Activated naive CD8-positive, alpha-beta T cell treated with anti-CD3 and anti-CD28 coated beads, Interleukin-2, amount 10 ng/mL, durations not matched to agents 7 days and 5 days (primary cell): ENCODE measurements at regions of chr17 and their contacts with region 1.

Region 1: GRCh38 chr17:6651357-6651918 is at the starts of genes C17orf100 and MED31:
- DNase-seq: peak; percentile 96
- ATAC-seq: peak; percentile 93
- H3K4me3 Mint-ChIP-seq: peak within 1 kb of the TSS; percentile 97
- H3K27ac Mint-ChIP-seq: peak within 1 kb of the TSS; percentile 98
- H3K4me1 Mint-ChIP-seq: peaks cover 38% of the 10 kb centered on the region
- H3K27me3 Mint-ChIP-seq: peaks cover 6% of the 10 kb centered on the region
- total RNA-seq, gene C17orf100: 2.0 to 2.5 TPM
- total RNA-seq, gene MED31: 23.1 to 23.2 TPM

Region 2: GRCh38 chr17:6630390-6630789 is 21.0 kb before region 1 on chr17:
- POLR2A ChIA-PET with region 1: no interaction called
- DNase-seq: no peak
- ATAC-seq: no peak
- H3K4me3 Mint-ChIP-seq: no peak overlapping the region
- H3K27ac Mint-ChIP-seq: no peak overlapping the region
- H3K4me1 Mint-ChIP-seq: peaks cover 7% of the 10 kb centered on the region
- H3K27me3 Mint-ChIP-seq: no peaks in the 10 kb centered on the region

Region 3: DNA sequence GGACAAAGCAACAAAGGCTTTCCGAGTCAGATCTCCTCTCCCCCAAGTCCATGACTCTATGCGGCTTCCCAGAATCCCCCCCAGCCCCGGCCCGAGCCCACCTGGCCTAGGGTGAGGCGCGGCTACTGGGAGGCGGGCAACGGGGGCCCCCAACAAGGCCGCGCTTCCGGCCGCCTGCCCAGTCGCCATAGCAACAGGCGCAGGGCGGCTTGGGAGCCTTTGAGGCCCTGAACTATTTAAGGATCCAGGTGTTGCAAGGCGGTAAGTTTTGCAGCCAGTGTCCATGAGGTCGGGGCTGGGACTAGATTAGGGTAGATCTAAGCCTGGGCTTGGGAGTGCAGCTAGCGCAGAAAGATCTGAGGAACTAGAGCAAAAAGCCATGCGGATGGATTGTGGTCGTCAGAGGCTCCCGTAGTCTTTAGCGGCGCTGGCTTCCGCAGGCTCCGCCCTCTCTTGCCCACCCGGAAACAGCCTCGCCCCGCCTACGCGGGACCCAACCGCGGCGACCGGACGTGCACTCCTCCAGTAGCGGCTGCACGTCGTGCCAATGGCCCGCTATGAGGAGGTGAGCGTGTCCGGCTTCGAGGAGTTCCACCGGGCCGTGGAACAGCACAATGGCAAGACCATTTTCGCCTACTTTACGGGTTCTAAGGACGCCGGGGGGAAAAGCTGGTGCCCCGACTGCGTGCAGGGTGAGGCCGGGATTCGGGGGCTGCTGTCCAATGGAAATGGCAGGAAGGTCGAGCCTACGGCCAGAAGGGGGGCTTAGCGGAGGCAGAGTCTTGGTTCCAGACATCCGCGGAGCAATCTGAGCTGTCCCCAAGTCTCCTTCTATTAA is 10.7 kb before region 1 on chr17 and contains the starts of genes KIAA0753 and TXNDC17:
- POLR2A ChIA-PET with region 1: interaction called, 42 read pairs
- DNase-seq: peak; percentile 96
- ATAC-seq: peak; percentile 84
- H3K4me3 Mint-ChIP-seq: peak within 1 kb of the TSS; percentile 97
- H3K27ac Mint-ChIP-seq: peak within 1 kb of the TSS; percentile 96
- H3K4me1 Mint-ChIP-seq: peaks cover 47% of the 10 kb centered on the region
- H3K27me3 Mint-ChIP-seq: no peaks in the 10 kb centered on the region
- total RNA-seq, gene KIAA0753: 17.0 to 18.2 TPM
- total RNA-seq, gene TXNDC17: 52.7 to 54.6 TPM